Activated CD8-positive, alpha-beta T cell treated with anti-CD3 and anti-CD28 coated beads, Interleukin-2, amount 10 ng/mL, durations not matched to agents 7 days and 5 days (primary cell): ENCODE measurements at regions of chr11 and their contacts with region 1.

Region 1: GRCh38 chr11:66438504-66439466 is at the start of gene MRPL11:
- DNase-seq: peak; percentile 93
- ATAC-seq: peak; percentile 97
- H3K4me3 Mint-ChIP-seq: peak within 1 kb of the TSS; percentile 91
- H3K27ac Mint-ChIP-seq: peak within 1 kb of the TSS; percentile 98
- H3K4me1 Mint-ChIP-seq: peaks cover 19% of the 10 kb centered on the region
- H3K27me3 Mint-ChIP-seq: no peaks in the 10 kb centered on the region
- total RNA-seq, gene MRPL11: 93.7 to 100 TPM

Region 2: DNA sequence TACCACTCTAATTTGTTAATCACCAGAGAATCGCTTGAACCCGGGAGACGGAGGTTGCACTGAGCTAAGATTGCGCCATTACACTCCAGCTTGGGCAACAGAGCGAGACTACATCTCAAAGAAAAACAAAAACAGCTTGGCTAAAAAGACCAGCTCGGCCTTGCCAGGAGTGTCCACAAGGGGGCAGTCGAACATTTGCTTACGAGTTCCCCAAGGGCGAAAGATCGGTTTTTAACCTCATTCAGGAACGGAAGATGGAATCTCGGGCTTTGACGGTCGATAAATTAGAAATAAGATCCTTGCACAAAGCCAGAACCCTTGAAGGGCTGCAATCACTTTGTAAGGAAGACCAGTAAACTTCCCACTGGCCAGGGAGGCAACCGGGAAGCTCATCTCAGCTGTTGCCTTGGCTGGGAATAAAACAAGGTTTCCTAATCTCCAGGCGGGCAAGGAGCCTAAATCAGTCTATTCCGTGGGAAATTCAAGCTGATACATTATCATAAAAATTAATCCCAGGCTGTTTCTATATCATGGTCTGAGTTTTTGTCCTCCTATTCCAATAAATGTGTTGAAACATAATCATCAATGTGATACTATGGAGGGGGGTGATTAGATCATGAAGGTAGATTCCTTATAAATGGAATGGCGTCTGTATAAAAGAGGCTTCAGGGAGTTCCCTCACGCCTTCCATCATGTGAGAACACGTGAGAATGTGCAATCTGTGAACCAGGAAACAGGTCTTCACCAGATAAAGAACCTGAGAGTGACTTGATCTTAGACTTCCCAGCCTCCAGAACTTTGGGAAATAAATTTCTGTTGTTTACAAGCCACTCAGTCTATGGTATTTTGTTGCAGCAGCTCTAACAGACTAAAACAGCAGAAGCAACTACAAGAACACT is 52.4 kb before region 1 on chr11:
- CTCF ChIA-PET with region 1: interaction called, 20 read pairs
- POLR2A ChIA-PET with region 1: no interaction called
- DNase-seq: peak; percentile 91
- ATAC-seq: peak; percentile 71
- H3K4me3 Mint-ChIP-seq: peak overlapping the region; percentile 20
- H3K27ac Mint-ChIP-seq: no peak overlapping the region
- H3K4me1 Mint-ChIP-seq: peaks cover 11% of the 10 kb centered on the region
- H3K27me3 Mint-ChIP-seq: no peaks in the 10 kb centered on the region

Region 3: GRCh38 chr11:66408488-66409214 is 30.1 kb before region 1 on chr11:
- CTCF ChIA-PET with region 1: interaction called, 20 read pairs
- POLR2A ChIA-PET with region 1: interaction called, 3 read pairs
- DNase-seq: peak; percentile 93
- ATAC-seq: peak; percentile 88
- H3K4me3 Mint-ChIP-seq: peak overlapping the region; percentile 73
- H3K27ac Mint-ChIP-seq: peak overlapping the region; percentile 74
- H3K4me1 Mint-ChIP-seq: peaks cover 6% of the 10 kb centered on the region
- H3K27me3 Mint-ChIP-seq: peaks cover 13% of the 10 kb centered on the region

Region 4: GRCh38 chr11:66421492-66422205 is 17.1 kb before region 1 on chr11:
- CTCF ChIA-PET with region 1: interaction called, 8 read pairs
- POLR2A ChIA-PET with region 1: interaction called, 10 read pairs
- DNase-seq: peak; percentile 92
- ATAC-seq: peak; percentile 72
- H3K4me3 Mint-ChIP-seq: no peak overlapping the region
- H3K27ac Mint-ChIP-seq: no peak overlapping the region
- H3K4me1 Mint-ChIP-seq: peaks cover 13% of the 10 kb centered on the region
- H3K27me3 Mint-ChIP-seq: peaks cover 19% of the 10 kb centered on the region

Region 5: GRCh38 chr11:66454249-66454648 is 15.5 kb after region 1 on chr11:
- CTCF ChIA-PET with region 1: interaction called, 11 read pairs
- POLR2A ChIA-PET with region 1: interaction called, 4 read pairs
- DNase-seq: no peak
- ATAC-seq: peak; percentile 53
- H3K4me3 Mint-ChIP-seq: no peak overlapping the region
- H3K27ac Mint-ChIP-seq: no peak overlapping the region
- H3K4me1 Mint-ChIP-seq: peaks cover 29% of the 10 kb centered on the region
- H3K27me3 Mint-ChIP-seq: no peaks in the 10 kb centered on the region

Region 6: GRCh38 chr11:66466225-66467027 is 27.6 kb after region 1 on chr11 and contains the start of gene PELI3:
- CTCF ChIA-PET with region 1: interaction called, 23 read pairs
- POLR2A ChIA-PET with region 1: interaction called, 4 read pairs
- DNase-seq: peak; percentile 93
- ATAC-seq: peak; percentile 85
- H3K4me3 Mint-ChIP-seq: peak within 1 kb of the TSS; percentile 81
- H3K27ac Mint-ChIP-seq: peak within 1 kb of the TSS; percentile 78
- H3K4me1 Mint-ChIP-seq: peaks cover 48% of the 10 kb centered on the region
- H3K27me3 Mint-ChIP-seq: no peaks in the 10 kb centered on the region
- total RNA-seq, gene PELI3: 5.1 to 5.8 TPM

Region 7: GRCh38 chr11:66480117-66480938 is 41.5 kb after region 1 on chr11 and contains the start of gene DPP3:
- CTCF ChIA-PET with region 1: interaction called, 20 read pairs
- POLR2A ChIA-PET with region 1: interaction called, 5 read pairs
- DNase-seq: peak; percentile 98
- ATAC-seq: peak; percentile 98
- H3K4me3 Mint-ChIP-seq: peak within 1 kb of the TSS; percentile 92
- H3K27ac Mint-ChIP-seq: peak within 1 kb of the TSS; percentile 91
- H3K4me1 Mint-ChIP-seq: peaks cover 31% of the 10 kb centered on the region
- H3K27me3 Mint-ChIP-seq: no peaks in the 10 kb centered on the region
- total RNA-seq, gene DPP3: 73.3 to 79.1 TPM